GM12878 (cell line): ENCODE measurements at regions of chr11 and their contacts with region 1.

Region 1: DNA sequence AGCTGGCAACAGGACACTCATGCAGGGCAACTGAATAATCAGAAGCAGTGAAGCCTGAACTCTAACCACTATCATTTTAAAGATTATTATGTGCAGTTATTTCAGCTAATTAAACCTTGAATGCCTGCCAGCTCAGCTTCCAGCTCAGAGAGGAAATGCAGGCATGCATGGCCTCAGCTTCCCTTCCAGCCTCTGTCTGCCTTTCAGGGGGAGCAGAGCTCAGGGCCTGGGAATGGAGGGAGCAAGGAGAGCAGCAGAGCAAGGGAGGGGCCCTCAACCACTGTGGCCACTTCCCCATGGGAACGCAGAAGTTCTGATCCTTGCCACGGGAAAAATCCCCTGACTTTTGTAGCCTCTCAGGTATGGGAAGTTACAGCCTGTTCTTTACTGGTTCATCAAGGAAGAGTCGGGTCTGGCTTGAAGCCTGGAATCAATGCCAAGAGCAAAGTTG is 32.5 kb upstream of the APLNR start:
- DNase-seq: no peak
- ATAC-seq: no peak
- H3K4me3 ChIP-seq: no peak overlapping the region
- H3K27ac ChIP-seq: no peak overlapping the region
- H3K4me1 ChIP-seq: no peaks in the 10 kb centered on the region
- H3K27me3 ChIP-seq: no peaks in the 10 kb centered on the region; a peak in 1 of 4 replicates
- CTCF ChIP-seq: no peak
- EP300 ChIP-seq: no peak
- POLR2A ChIP-seq: no peak
- RAD21 ChIP-seq: no peak

Region 2: DNA sequence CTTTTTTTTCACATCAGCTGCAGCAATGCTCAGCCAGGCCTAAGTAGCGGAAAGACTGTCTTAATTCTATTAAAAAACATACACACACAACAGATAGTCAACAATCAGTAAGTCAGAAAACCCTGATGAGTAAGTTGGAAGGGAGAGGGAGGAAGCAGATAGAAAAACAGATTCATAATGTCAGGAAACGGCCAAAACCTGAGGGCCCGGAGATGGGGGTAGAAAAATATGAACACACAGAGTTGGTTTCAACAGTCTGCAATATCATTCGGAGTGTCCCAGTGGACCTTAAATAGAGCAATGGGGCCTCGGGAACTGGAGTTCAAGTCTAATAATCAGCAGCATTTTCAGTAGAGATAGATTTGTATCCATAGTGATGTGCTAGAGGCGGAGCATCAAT is 73.0 kb before region 1 on chr11:
- CTCF ChIA-PET with region 1: no interaction called
- POLR2A ChIA-PET with region 1: no interaction called
- RAD21 ChIA-PET with region 1: no interaction called
- SMC1A ChIA-PET with region 1: no interaction called
- in situ Hi-C with region 1: no loop called
- intact Hi-C with region 1: loop called (anchors 10 kb)
- DNase-seq: no peak
- ATAC-seq: no peak
- H3K4me3 ChIP-seq: no peak overlapping the region
- H3K27ac ChIP-seq: no peak overlapping the region
- H3K4me1 ChIP-seq: no peaks in the 10 kb centered on the region
- H3K27me3 ChIP-seq: no peaks in the 10 kb centered on the region
- CTCF ChIP-seq: no peak
- EP300 ChIP-seq: no peak
- POLR2A ChIP-seq: no peak
- RAD21 ChIP-seq: no peak

Region 3: DNA sequence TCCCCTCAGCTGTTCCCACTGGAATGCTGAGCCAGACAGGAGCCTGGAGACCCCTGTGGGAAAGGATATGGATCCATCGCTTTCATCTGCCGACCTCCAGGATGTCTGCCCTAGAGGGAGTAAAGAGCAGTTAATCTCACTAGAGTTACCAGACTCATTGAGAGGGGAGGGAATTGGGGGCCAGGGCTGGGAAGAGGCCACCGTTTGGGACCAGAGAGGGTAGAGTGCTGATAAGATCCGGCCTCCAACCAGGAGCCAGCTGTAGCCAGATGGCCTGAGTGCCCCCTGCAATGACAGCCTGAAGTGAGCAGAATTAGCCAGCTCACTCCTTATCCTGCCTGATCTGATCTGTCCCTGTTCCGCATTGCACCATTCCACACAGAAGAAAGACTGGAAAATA is 28.8 kb before region 1 on chr11:
- CTCF ChIA-PET with region 1: no interaction called
- POLR2A ChIA-PET with region 1: no interaction called
- RAD21 ChIA-PET with region 1: no interaction called
- SMC1A ChIA-PET with region 1: no interaction called
- in situ Hi-C with region 1: no loop called
- intact Hi-C with region 1: no loop called
- DNase-seq: no peak
- ATAC-seq: no peak
- H3K4me3 ChIP-seq: no peak overlapping the region
- H3K27ac ChIP-seq: no peak overlapping the region
- H3K4me1 ChIP-seq: no peaks in the 10 kb centered on the region
- H3K27me3 ChIP-seq: peaks cover 0 to 2% of the 10 kb centered on the region in 2 experiments; a peak in 2 of 4 replicates
- CTCF ChIP-seq: no peak
- EP300 ChIP-seq: no peak
- POLR2A ChIP-seq: no peak
- RAD21 ChIP-seq: no peak

Region 4: DNA sequence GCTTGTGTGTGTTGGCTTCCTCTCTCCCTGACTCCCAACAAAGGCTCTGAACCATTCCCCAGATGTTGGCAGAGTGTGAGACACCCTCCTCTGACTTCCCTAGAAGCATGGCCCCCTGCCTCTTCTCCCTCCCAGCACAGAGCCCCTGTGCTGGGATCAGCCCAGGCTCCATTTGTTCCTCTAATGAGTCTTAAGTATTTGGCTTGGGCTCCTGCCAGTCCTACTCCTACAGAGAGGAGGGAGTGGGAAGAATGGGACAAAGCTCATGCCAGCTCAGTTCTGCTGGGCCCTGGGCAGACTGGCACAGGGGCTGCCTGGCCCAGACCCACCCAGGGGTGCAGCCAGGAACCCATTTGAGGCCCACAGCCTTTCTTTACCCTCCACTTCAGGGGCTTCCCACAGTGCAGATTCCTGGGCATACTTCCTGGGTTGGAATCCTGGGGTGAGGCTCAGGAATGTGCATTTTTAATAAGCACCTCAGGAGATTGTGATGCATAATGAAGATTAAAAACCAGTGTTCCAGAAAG is 25.1 kb after region 1 on chr11:
- CTCF ChIA-PET with region 1: no interaction called
- POLR2A ChIA-PET with region 1: no interaction called
- RAD21 ChIA-PET with region 1: no interaction called
- SMC1A ChIA-PET with region 1: no interaction called
- in situ Hi-C with region 1: no loop called
- intact Hi-C with region 1: no loop called
- DNase-seq: no peak
- ATAC-seq: no peak
- H3K4me3 ChIP-seq: no peak overlapping the region
- H3K27ac ChIP-seq: no peak overlapping the region
- H3K4me1 ChIP-seq: no peaks in the 10 kb centered on the region
- H3K27me3 ChIP-seq: 0 out of 4 replicates have a peak, but pooled peaks cover 0 to 3% of the 10 kb centered on the region in 2 experiments
- CTCF ChIP-seq: no peak
- EP300 ChIP-seq: no peak
- POLR2A ChIP-seq: no peak
- RAD21 ChIP-seq: no peak

Region 5: DNA sequence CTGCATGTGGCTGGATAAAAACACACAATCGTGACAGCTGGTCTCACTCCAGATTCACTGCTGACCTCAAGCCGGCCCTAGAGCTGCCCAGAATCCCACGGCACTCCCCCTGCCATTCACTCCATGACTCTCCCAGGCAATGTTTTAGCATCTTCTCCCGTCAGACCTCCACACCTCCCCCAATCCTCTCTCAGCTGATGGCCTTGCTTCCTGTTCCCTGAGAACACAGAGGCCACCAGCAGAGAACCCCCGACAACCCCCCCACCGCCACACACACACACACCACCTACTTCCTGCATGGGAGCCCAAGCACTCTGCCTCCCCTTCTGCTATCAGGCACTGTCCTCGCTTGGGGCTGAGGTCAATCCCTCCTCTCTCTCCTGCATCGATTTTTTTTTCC is 45.9 kb after region 1 on chr11:
- CTCF ChIA-PET with region 1: no interaction called
- POLR2A ChIA-PET with region 1: no interaction called
- RAD21 ChIA-PET with region 1: no interaction called
- SMC1A ChIA-PET with region 1: no interaction called
- in situ Hi-C with region 1: no loop called
- intact Hi-C with region 1: no loop called
- DNase-seq: no peak
- ATAC-seq: no peak
- H3K4me3 ChIP-seq: no peak overlapping the region
- H3K27ac ChIP-seq: no peak overlapping the region
- H3K4me1 ChIP-seq: peaks cover 3% of the 10 kb centered on the region
- H3K27me3 ChIP-seq: no peaks in the 10 kb centered on the region
- CTCF ChIP-seq: no peak
- EP300 ChIP-seq: no peak
- POLR2A ChIP-seq: no peak
- RAD21 ChIP-seq: no peak